ENCODE measurements at regions of chr1 and their contacts with region 1.

Region 1: DNA sequence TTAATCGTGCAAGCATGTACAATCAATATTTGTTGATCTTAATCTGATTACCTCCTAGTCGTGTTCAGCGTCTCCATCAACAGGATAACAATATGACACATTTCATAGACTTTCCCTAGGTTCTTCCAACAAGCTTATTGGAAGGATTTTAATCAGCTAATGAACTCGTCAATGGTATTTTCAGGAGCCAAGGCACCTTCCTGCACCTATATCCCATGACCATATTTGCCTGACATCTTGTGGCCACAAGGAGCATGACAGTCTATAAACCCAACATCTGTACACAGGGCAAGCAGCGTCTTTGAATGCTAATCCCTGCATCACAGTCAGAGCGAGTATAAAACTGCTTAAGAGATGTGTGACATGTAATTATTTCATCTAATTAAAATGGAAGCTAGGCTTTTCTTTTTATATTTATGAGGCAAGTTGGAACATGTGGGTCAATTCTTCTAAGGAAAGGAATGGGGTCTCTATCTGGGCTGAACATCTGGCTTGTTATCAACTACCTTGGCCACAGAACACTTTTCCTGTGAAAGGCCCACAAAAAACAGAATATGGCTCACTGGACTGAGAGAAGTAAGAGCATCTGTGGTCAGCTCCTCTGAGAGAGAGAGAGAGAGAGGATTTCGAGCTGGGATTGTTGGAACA is 388.8 kb downstream of the NTNG1 start:
- ATAC-seq: peak; percentile 70 to 96 (median 94)
- H3K4me3 ChIP-seq: no peak overlapping the region
- H3K27ac ChIP-seq: no peak overlapping the region
- H3K4me1 ChIP-seq: peaks cover 18 to 19% of the 10 kb centered on the region in 2 donors

Region 2: DNA sequence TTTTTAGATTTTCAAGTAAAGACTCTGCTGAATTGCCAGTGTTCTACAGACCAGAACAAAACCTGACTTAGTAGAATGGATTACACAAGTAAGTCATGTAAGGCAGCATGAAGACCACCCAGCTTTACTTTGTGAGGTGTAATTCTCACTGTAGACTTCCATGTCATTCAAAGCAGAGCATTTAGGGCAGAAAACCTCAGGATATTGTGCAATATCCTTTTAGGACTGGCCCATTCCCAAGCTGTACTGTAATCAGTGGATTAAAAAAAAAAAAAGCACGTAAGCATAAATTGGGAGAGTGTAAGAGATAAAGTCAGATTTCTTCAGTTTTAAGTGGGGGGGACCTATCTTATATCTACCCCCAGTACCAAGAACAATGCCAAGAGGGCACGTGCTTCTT is 853.6 kb before region 1 on chr1:
- in situ Hi-C with region 1: no loop called
- ATAC-seq: no peak
- H3K4me3 ChIP-seq: no peak overlapping the region
- H3K27ac ChIP-seq: no peak overlapping the region
- H3K4me1 ChIP-seq: peaks cover 0 to 16% of the 10 kb centered on the region in 2 donors

Region 3: GRCh38 chr1:107277022-107277421 is 252.6 kb before region 1 on chr1:
- in situ Hi-C with region 1: loop called in 1 of 9 experiments (anchors 25 kb)
- ATAC-seq: peak in 5 of 8 experiments; percentile 53 to 83 (median 72)
- H3K4me3 ChIP-seq: no peak overlapping the region
- H3K27ac ChIP-seq: no peak overlapping the region
- H3K4me1 ChIP-seq: no peaks in the 10 kb centered on the region

Region 4: GRCh38 chr1:107648071-107648470 is 118.4 kb after region 1 on chr1:
- in situ Hi-C with region 1: no loop called
- ATAC-seq: peak in 3 of 8 experiments; percentile 47 to 67 (median 48)
- H3K4me3 ChIP-seq: no peak overlapping the region
- H3K27ac ChIP-seq: no peak overlapping the region
- H3K4me1 ChIP-seq: no peaks in the 10 kb centered on the region